ENCODE measurements at regions of chr3 and their contacts with region 1.

Region 1: DNA sequence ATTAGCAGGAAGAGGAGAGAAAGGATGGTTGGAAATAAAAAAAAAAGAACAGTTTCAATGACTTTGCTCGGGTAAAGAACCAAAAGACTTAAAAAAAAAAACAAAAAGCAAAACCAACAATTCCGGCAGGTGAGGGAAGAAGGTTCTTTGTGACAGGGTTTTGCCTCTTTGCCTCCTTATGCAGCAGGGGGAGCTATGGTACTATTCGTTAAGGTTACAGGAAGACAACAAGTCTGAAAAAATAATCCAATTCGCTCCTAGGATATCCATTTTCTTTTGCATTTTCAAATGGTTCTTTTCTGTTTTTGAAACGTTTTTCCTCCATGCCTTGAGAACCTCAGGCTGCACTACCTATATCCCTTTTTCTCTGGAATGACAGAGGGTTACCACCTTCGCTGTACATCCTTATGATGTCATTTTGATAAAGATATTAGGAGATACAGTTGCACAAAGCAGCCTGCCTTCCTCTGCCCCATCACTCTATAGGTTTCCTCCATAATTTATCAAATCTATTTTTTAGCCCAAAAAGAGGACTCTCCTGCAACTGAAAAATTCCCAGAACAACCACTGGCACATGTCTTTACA is 55.0 kb downstream of the CFAP20DC start:
- DNase-seq: peak; percentile 57
- H3K4me3 Mint-ChIP-seq: no peak overlapping the region
- H3K27ac Mint-ChIP-seq: no peak overlapping the region
- H3K4me1 Mint-ChIP-seq: peaks cover 9% of the 10 kb centered on the region
- H3K27me3 Mint-ChIP-seq: no peaks in the 10 kb centered on the region

Region 2: DNA sequence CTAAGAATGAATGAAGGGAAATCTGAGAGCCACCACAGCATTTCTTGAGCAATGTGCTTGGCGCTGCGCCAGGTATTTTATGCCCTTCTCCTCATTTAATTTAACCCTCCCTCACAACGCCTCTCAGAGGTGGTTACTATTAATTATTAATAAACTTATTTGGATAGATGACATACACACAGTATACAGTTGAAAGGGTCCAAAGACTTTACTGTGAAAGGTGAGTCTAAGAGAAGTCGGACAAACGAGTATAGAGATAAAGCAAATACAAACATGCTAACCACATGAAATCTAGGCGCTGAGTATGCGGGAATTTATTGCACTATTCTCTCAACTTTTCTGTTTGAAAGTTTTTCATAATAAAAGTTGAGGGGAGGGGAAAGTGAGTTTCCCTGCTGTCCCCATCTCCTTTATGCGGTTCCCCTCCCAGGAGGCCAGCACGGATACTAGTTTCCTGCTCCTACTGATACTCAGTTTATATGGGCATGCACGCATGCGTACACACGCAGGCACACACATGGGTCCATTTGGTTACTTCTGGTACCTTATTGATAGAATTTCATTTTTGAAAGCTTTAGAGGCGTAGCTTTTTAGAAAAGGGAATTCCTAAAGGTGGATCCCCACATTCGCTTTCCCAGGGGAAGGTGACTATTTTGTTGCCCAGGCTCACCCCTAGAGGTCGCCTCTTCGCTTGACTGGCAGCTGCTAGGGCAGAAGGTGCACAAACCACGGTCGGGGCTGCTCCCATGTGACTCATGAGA is 531.5 kb before region 1 on chr3:
- CTCF ChIA-PET with region 1: no interaction called
- intact Hi-C with region 1: no loop called
- DNase-seq: peak; percentile 92
- H3K4me3 Mint-ChIP-seq: peak overlapping the region; percentile 16
- H3K27ac Mint-ChIP-seq: peak overlapping the region; percentile 61
- H3K4me1 Mint-ChIP-seq: peaks cover 15% of the 10 kb centered on the region
- H3K27me3 Mint-ChIP-seq: peaks cover 3% of the 10 kb centered on the region

Region 3: DNA sequence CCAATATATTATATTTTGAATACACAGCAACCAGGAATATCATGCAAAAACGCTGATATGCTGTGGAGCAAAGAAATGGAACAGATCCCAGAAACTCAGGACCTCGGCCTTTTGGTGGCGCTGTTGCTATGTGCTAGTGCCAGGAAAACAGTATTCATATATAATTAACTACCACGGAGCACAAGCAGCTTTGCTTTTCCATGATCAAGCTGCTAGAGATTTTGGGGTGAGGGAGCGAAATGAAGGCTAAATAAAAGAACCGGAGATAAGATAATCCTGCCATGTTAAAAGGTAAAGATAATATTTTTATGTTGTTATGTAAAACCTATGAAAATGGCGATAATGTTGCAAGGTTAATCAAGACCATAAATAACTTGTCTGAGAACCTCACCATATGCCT is 170.6 kb before region 1 on chr3:
- CTCF ChIA-PET with region 1: interaction called, 5 read pairs
- intact Hi-C with region 1: loop called (anchors 5 kb)
- DNase-seq: peak; percentile 68
- H3K4me3 Mint-ChIP-seq: no peak overlapping the region
- H3K27ac Mint-ChIP-seq: no peak overlapping the region
- H3K4me1 Mint-ChIP-seq: no peaks in the 10 kb centered on the region
- H3K27me3 Mint-ChIP-seq: no peaks in the 10 kb centered on the region

Region 4: DNA sequence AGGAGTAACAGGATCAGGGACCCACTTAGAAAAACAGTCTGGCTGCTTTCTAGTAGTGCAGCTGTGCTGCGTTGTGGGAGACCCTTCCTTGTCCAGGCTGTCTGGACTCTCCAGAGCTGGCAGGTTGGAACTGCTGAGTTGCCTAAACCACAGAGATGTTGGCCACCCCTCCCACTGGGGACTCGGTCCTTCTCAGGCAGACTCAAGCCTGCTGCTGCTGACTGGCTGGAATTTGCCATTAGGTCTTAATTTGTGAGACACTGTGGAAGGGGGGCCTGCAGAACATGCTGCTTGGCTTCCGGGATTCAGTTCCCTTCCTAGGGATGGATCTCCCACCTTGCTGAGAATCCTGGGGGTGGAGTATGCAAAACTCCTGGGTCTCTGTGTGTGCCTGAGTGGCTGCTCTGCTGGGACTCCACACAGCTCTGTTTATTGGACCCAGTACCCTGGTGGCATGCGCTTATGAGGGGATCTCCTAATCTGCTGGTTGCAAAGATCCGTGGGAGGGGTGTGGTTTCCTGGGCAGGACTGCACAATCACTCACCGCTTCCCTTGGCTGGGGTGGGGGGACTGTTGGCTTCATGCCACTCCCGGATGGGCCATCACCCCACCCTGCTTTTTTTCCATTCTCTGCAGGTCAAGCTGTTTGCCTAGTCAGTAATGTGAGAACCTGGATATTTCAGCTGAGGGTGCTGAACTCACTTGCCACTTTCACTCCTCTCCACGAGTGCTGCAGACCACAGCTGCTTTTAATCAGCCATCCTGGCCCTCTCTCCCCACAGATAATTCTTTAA is 95.5 kb before region 1 on chr3:
- CTCF ChIA-PET with region 1: no interaction called
- intact Hi-C with region 1: no loop called
- DNase-seq: peak; percentile 31
- H3K4me3 Mint-ChIP-seq: no peak overlapping the region
- H3K27ac Mint-ChIP-seq: no peak overlapping the region
- H3K4me1 Mint-ChIP-seq: peaks cover 6% of the 10 kb centered on the region
- H3K27me3 Mint-ChIP-seq: peaks cover 1% of the 10 kb centered on the region

Region 5: DNA sequence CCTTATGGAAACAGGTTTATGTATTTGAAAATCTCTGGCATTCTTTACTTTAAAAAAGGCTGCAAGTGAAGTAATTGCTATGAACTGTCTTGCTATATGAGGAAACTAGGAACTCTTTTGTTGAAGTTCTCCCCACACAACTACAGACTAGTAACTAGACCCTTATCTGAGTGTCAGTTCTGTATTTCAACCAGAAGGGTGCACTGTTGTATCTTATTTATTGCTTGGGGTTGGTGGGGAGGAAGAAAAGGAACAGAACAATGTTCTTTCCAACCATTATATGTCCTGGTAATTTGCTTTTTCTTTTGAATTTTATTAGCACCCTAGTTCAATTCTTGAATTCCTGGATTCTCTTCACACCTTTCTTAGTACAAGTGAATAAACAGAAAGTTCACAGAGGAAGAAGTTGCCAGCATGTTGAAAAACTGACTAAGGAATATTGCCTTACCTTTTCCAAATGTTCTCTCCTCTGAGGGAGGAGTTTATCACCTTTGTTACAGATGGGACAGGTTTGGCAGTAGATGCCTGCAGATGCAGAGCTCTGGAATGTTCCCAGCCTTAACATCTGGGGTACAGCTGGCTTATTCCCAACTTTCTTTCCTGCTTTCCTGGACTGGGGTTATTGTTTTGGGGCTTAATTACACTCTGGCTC is 217.4 kb after region 1 on chr3:
- CTCF ChIA-PET with region 1: no interaction called
- intact Hi-C with region 1: loop called (anchors 5 kb)
- DNase-seq: no peak
- H3K4me3 Mint-ChIP-seq: no peak overlapping the region
- H3K27ac Mint-ChIP-seq: no peak overlapping the region
- H3K4me1 Mint-ChIP-seq: peaks cover 2% of the 10 kb centered on the region
- H3K27me3 Mint-ChIP-seq: no peaks in the 10 kb centered on the region

Region 6: DNA sequence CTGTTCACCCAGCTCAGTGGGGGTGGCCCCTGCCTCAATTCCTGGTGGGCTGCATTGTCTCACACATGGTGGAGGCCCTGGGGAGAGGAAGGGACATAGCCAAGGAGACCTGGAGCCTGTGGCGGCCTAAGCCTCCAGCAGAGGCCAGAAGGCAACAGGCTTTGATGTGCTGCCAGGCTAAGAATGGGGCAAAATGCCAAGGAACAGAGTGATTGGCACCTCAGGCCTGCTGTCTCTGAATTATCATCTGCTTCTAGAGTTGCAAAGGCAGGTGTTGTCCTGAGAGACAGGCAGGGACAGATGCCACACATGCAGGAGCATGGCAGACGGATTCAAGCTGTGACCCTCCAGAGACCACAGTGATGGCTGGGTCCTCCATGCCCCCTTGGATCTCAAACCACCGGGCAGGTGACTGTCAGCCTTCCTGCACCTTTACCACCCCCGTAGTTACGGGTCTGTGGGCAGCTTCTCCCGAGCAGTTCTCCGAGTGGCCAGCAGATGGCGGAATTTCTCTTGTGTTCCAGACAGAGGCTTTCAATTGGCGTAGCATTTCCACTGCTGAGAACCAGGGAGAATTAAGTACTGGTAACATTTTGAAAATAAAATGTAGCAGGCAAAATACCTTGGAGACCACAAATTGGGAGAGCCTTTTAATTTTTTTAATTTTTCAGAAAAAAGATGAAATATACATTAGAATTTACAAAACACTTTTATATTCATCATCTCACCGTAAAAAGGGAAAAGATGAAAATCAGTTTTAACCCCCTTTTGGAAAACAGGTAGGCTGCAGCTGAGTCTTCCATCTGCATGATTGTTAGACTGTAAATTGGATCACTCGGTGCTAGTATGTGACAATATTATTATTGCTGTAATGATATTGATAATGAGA is 580.5 kb after region 1 on chr3:
- CTCF ChIA-PET with region 1: no interaction called
- intact Hi-C with region 1: loop called (anchors 10 kb)
- DNase-seq: peak; percentile 94
- H3K4me3 Mint-ChIP-seq: no peak overlapping the region
- H3K27ac Mint-ChIP-seq: no peak overlapping the region
- H3K4me1 Mint-ChIP-seq: peaks cover 5% of the 10 kb centered on the region
- H3K27me3 Mint-ChIP-seq: no peaks in the 10 kb centered on the region

Measured in activated naive CD4-positive, alpha-beta T cell treated with anti-CD3 and anti-CD28 coated beads for 36 hours (primary cell).